ENCODE measurements at regions of chr17 and their contacts with region 1.

Region 1: DNA sequence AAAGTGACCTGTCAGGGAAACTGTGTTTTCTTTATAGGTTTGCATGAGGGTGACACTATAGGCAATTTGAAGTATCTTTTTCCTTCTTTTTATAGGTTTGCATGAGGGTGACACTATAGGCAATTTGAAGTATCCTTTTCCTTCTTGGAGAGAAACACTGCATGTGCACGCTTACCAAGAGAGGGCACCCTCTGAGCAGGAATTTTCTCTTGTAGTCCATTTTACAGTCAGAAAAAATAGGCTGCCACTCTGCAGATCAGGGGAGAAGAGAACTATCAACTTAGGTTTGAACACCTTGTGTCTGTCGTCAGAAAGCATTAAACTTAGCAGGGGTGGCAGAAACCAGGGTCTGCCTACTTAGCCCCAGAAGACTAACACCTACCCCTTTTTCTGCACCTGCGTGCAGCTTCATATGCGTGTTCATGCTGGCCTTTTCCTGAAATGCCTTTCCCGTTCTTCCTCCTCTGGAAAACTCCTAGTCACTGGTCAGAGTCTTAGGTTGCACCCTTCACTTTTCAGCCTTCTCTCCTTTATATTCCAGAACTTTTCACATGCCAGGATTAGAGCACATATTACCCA is 16.4 kb upstream of the SMIM36 start:
- DNase-seq: no peak
- H3K4me3 ChIP-seq: no peak overlapping the region
- H3K27ac ChIP-seq: no peak overlapping the region
- H3K4me1 ChIP-seq: peaks cover 0 to 7% (median 0%) of the 10 kb centered on the region in 6 donors
- H3K27me3 ChIP-seq: no peaks in the 10 kb centered on the region
- CTCF ChIP-seq: peak in 6 of 11 experiments; percentile 26 to 53 (median 39)
- POLR2A ChIP-seq: no peak

Region 2: DNA sequence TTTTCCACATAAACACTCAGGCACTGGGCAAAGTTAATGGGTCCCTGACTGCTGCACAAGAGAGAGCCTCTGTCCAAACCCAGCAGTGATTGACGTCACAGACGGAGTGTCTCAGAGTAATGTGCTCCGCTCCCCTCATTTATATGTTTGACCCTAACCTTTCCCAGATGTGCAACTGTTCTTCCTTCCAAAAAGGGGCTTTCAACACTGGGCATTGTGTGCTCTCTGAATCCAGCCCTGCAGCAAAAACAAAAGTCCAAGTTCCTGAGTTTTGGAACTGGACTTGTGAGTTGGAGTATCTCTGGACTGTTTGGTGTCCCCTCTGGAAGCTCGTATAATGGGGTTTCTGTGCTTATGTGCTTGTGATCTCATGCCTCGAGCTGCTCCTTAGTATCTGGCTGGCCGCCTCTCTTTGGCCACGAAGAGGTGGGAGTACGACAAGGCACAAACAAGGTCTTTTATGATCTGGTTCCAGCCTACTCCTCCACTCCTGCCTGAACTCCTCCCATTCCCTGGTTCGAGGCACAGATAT is 60.0 kb after region 1 on chr17:
- intact Hi-C with region 1: no loop called
- DNase-seq: no peak
- H3K4me3 ChIP-seq: no peak overlapping the region
- H3K27ac ChIP-seq: peak overlapping the region in 6 of 8 donors; percentile 9 to 64 (median 40)
- H3K4me1 ChIP-seq: peaks cover 0 to 13% (median 0%) of the 10 kb centered on the region in 6 donors
- H3K27me3 ChIP-seq: no peaks in the 10 kb centered on the region
- CTCF ChIP-seq: no peak
- POLR2A ChIP-seq: no peak

Region 3: DNA sequence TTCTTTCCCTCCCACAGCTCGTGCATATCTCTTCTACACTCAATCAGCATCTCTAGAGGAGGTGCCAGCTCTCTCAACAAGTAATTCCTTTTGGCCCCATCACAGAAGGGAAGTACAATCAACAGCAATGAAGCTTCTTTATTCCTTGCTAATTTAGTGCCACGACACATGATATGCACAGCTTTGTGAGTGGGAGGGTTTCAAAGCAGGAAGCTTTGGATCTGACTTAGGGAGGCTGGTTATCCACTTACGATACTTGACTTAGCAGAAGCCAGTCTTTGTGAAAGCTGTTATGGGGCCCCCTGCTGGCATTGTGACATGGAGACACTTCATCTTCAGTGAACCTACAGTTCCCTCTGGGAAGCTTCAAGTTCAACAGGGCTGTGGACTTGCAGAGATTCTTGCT is 114.0 kb after region 1 on chr17:
- intact Hi-C with region 1: loop called (anchors 10 kb)
- DNase-seq: peak; percentile 77
- H3K4me3 ChIP-seq: no peak overlapping the region
- H3K27ac ChIP-seq: no peak overlapping the region
- H3K4me1 ChIP-seq: peaks cover 0 to 15% (median 0%) of the 10 kb centered on the region in 6 donors
- H3K27me3 ChIP-seq: peaks cover 0 to 5% (median 0%) of the 10 kb centered on the region in 7 donors
- CTCF ChIP-seq: peak in 9 of 11 experiments; percentile 23 to 69 (median 50)
- POLR2A ChIP-seq: no peak

Region 4: DNA sequence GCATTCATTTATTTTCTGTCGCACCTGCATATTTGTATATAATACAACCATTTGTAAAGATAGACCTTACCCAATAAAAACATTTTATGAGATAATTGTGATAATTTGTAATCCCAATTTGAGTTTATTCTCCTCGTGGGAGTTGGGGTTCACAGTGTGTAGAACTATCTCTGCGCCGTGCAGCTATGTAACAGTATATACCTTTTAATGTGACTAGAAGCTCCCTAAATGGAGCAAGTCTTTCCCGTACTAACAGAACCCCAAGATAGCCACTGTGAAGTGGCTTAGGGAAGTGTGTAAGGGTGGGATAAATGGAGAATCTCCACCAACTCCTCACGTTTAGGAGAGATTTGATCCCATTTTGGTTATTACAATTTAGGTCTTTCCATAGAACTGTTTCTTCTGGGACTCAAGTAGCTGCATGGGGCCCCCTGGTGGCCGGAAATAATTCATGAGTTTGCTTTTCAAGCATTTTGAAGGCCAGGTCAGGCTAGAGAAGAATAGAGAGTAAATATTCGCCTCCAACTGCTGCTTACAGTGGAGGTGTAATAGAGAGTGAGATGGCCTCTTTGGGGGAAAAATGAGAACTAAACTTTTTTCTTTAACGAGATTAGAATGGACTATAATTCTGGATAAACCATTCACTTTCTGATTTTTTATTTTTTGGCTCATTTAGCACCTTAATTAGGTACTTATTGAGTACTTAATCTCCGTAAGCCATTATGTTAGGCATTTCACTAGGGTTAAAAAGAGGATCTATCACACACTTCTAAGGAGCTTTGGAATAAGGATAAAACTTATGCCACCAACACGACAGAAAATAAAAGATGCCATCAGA is 190.5 kb after region 1 on chr17:
- intact Hi-C with region 1: loop called (anchors 5 kb)
- DNase-seq: peak; percentile 85
- H3K4me3 ChIP-seq: no peak overlapping the region
- H3K27ac ChIP-seq: no peak overlapping the region
- H3K4me1 ChIP-seq: peaks cover 0 to 6% (median 0%) of the 10 kb centered on the region in 6 donors
- H3K27me3 ChIP-seq: peaks cover 0 to 19% (median 0%) of the 10 kb centered on the region in 7 donors
- CTCF ChIP-seq: peak; percentile 36 to 82 (median 69)
- POLR2A ChIP-seq: no peak